Activated CD4-positive, alpha-beta T cell treated with anti-CD3 and anti-CD28 coated beads, Interleukin-2, amount 10 ng/mL, durations not matched to agents 7 days and 5 days (primary cell): ENCODE measurements at regions of chr11 and their contacts with region 1.

Region 1: DNA sequence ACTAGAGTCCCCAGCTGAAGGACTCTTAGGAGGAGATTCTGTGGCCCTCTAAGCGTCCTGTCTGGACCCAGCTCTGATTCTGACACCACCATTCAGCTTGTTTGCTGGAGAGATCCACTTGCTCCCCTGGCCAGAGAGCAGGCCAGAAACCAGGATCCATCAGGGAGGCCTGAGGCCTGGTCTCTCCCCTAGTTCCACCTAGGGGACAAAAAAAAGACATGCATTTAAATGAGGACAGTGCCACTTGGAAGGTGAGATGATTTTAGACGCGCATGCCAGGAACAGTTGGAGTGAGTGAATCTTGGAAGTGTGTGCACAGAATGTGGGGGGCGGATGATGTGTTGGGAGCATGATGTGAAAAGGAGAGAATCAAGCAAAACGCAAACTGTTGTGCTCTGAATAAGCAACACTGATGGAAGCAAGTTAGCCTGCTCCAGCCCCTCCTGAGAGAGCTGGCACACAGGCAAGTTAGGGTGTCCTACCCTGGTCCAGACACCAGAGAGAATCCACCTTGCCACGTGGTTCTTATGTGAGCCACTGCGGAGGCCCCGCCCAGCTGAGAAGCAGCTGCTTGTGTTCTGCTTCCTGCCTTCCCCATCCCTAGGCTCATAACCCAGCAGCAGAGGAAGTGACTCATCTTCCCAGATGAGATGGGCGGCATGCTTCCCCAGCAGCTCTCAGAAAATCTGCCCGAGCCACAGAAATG is 8.0 kb upstream of the SLCO2B1 start:
- DNase-seq: peak; percentile 82
- H3K4me3 Mint-ChIP-seq: peak overlapping the region; percentile 33
- H3K27ac Mint-ChIP-seq: peak overlapping the region; percentile 85
- H3K4me1 Mint-ChIP-seq: peaks cover 45% of the 10 kb centered on the region
- H3K27me3 Mint-ChIP-seq: peaks cover 8% of the 10 kb centered on the region

Region 2: GRCh38 chr11:75040167-75040770 is 102.6 kb before region 1 on chr11:
- CTCF ChIA-PET with region 1: no interaction called
- POLR2A ChIA-PET with region 1: no interaction called
- DNase-seq: no peak
- H3K4me3 Mint-ChIP-seq: no peak overlapping the region
- H3K27ac Mint-ChIP-seq: no peak overlapping the region
- H3K4me1 Mint-ChIP-seq: peaks cover 3% of the 10 kb centered on the region
- H3K27me3 Mint-ChIP-seq: peaks cover 7% of the 10 kb centered on the region

Region 3: DNA sequence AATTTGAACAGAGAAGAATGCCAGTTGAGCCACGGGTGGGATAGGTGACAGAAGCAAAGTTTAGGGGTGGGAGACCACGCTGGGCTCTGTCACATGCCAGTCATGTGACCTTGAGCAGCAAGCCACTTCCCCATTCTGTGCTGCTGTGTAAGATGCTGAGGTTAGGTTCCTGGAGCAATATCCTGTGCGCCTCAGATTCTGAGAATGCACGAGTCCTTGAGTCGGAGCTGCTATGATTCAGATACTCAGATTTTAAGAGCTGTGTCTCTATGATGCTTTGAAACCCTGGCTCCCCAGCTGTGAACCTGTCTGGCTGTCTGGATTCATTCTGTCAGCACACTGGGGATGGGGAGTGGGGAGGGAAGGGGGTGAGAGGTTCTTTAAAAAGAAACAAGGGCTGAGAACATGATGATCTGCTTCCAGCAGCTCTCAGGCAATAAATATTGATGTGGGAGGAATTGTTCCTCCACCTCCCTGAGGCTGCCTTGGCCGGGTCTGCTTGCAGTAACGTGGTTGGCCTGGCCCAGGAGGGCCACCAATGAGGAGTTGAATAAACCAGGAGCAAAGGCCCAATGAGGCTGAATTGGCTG is 32.0 kb after region 1 on chr11:
- CTCF ChIA-PET with region 1: interaction called, 11 read pairs
- POLR2A ChIA-PET with region 1: no interaction called
- DNase-seq: peak; percentile 49
- H3K4me3 Mint-ChIP-seq: no peak overlapping the region
- H3K27ac Mint-ChIP-seq: peak overlapping the region; percentile 88
- H3K4me1 Mint-ChIP-seq: peaks cover 25% of the 10 kb centered on the region
- H3K27me3 Mint-ChIP-seq: peaks cover 1% of the 10 kb centered on the region

Region 4: DNA sequence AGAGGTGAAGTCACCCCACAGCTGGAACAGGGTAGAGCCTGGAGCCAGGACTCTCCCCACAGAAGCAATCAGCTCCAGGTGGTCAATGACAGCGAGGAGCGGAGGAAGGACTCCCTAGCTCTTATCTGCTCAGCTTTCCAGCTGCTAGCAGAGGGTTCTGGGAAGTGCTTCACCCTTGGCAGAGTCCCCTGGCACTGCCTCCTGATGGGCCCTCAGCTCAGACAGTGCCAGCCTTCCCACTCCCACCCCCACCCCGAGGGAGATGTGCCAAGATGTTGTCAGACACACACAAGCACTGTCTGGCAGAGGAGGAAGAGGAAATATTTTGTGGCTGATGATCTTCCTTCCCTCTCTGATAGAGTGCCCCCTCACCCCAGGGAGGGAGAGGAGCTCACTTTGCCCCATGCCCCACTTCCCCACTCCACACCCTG is 52.3 kb after region 1 on chr11:
- CTCF ChIA-PET with region 1: interaction called, 33 read pairs
- POLR2A ChIA-PET with region 1: no interaction called
- DNase-seq: no peak
- H3K4me3 Mint-ChIP-seq: no peak overlapping the region
- H3K27ac Mint-ChIP-seq: no peak overlapping the region
- H3K4me1 Mint-ChIP-seq: no peaks in the 10 kb centered on the region
- H3K27me3 Mint-ChIP-seq: peaks cover 5% of the 10 kb centered on the region

Region 5: DNA sequence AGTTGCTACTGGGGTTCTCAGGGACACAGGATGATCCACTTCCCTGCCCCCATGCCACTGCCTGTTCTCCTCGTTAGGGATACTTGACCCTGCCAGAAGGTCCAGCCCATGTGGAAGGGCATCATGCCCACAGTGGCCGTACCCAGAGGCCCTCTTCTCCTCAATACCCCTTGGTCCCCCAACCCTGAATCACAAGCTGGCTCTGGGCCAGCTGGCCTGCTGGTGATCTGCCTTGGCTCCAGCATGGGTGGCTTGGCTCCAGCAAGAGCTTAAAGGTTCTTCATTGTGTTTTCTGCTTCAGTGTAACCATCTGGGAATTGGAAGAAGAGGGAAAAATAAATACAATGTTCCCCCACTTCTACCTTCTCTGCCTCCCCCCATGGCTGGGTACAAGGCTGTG is 86.6 kb after region 1 on chr11:
- CTCF ChIA-PET with region 1: interaction called, 11 read pairs
- POLR2A ChIA-PET with region 1: no interaction called
- DNase-seq: no peak
- H3K4me3 Mint-ChIP-seq: no peak overlapping the region
- H3K27ac Mint-ChIP-seq: no peak overlapping the region
- H3K4me1 Mint-ChIP-seq: no peaks in the 10 kb centered on the region
- H3K27me3 Mint-ChIP-seq: no peaks in the 10 kb centered on the region